Thyroid gland (tissue), 4 donors: ENCODE measurements at regions of chr9 and their contacts with region 1.

Region 1: DNA sequence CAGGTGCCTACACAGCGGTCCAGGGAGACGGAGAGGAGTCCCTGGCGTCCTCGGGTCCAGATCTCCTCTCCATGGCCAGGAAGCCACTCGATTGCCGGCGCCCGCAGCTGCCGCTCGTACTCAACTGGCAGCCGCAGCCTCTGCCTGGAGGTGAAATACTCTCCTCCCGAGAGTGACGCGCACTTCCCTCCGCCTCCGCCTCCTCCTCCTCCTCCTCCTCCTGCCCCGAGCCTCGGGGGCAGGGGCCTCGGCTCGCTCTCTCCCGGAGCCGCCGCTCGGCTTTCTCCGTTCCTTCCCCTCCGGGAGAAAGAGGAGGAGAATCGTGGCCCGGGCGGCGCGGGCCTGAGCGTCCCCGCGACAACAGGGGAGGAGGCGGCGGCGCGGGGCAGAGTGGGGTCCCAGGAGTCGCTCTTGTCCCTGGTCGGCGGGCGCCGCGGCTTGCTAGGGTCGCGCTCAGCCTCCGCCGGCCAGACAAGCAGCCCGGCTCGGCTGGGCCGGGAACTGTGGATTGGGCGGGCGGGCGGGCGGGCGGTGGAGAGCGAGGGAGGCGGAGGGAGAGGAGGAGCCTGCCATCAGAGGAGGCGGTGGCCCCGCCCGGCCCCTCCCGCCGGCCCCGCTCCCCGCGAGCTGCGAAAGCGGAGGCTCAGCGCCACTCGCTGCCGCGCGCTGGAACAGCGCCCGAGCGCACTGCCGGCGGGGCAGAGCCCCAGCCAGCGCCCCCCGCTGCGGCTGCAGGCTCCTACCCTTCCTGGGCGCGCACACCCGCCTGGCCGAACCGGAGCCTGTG is at the start of gene CEMIP2:
- DNase-seq: peak; percentile 91 to 92
- H3K4me3 ChIP-seq: peak within 1 kb of the TSS; percentile 61 to 93 (median 73)
- H3K27ac ChIP-seq: peak within 1 kb of the TSS; percentile 97 to 99 (median 99)
- H3K4me1 ChIP-seq: peaks cover 17 to 24% of the 10 kb centered on the region in 2 donors
- H3K27me3 ChIP-seq: no peaks in the 10 kb centered on the region
- CTCF ChIP-seq: peak in 3 of 6 experiments; percentile 45 to 58 (median 46)
- POLR2A ChIP-seq: peak; percentile 69 to 99
- total RNA-seq, gene CEMIP2: 29.6 to 111 (median 34.0) TPM

Region 2: GRCh38 chr9:71549023-71549422 is 219.6 kb before region 1 on chr9:
- intact Hi-C with region 1: no loop called
- DNase-seq: no peak
- H3K4me3 ChIP-seq: no peak overlapping the region
- H3K27ac ChIP-seq: no peak overlapping the region
- H3K4me1 ChIP-seq: no peaks in the 10 kb centered on the region
- H3K27me3 ChIP-seq: no peaks in the 10 kb centered on the region
- CTCF ChIP-seq: no peak
- POLR2A ChIP-seq: no peak

Region 3: GRCh38 chr9:71604197-71605063 is 164.2 kb before region 1 on chr9:
- intact Hi-C with region 1: loop called (anchors 5 kb)
- DNase-seq: peak; percentile 77 to 87
- H3K4me3 ChIP-seq: no peak overlapping the region
- H3K27ac ChIP-seq: no peak overlapping the region
- H3K4me1 ChIP-seq: no peaks in the 10 kb centered on the region
- H3K27me3 ChIP-seq: no peaks in the 10 kb centered on the region
- CTCF ChIP-seq: peak; percentile 32 to 81 (median 74)
- POLR2A ChIP-seq: no peak

Region 4: GRCh38 chr9:71716138-71716909 is 52.3 kb before region 1 on chr9:
- intact Hi-C with region 1: loop called (anchors 10 kb)
- DNase-seq: no peak
- H3K4me3 ChIP-seq: no peak overlapping the region
- H3K27ac ChIP-seq: no peak overlapping the region
- H3K4me1 ChIP-seq: peaks cover 0 to 4% of the 10 kb centered on the region in 2 donors
- H3K27me3 ChIP-seq: no peaks in the 10 kb centered on the region
- CTCF ChIP-seq: peak in 4 of 6 experiments; percentile 27 to 54 (median 40)
- POLR2A ChIP-seq: no peak